ENCODE measurements at regions of chr14 and their contacts with region 1.

Region 1: GRCh38 chr14:92686900-92687444 is 61.5 kb downstream of the LGMN start:
- DNase-seq: peak; percentile 90
- H3K4me3 ChIP-seq: peak overlapping the region; percentile 37
- H3K27ac ChIP-seq: no peak overlapping the region
- H3K4me1 ChIP-seq: peaks cover 11% of the 10 kb centered on the region
- H3K27me3 ChIP-seq: no peaks in the 10 kb centered on the region
- CTCF ChIP-seq: peak; percentile 97

Region 2: GRCh38 chr14:92362781-92363235 is 324.2 kb before region 1 on chr14:
- CTCF ChIA-PET with region 1: no interaction called
- POLR2A ChIA-PET with region 1: no interaction called
- intact Hi-C with region 1: loop called (anchors 10 kb)
- DNase-seq: peak; percentile 32
- H3K4me3 ChIP-seq: no peak overlapping the region
- H3K27ac ChIP-seq: no peak overlapping the region
- H3K4me1 ChIP-seq: no peaks in the 10 kb centered on the region
- H3K27me3 ChIP-seq: peaks cover 28% of the 10 kb centered on the region
- CTCF ChIP-seq: no peak

Measured in A673 (cell line).